ENCODE measurements at regions of chr11 and their contacts with region 1.

Region 1: GRCh38 chr11:93234602-93235207 is 36.9 kb upstream of the SLC36A4 start:
- DNase-seq: peak; percentile 84 to 88
- H3K4me3 ChIP-seq: no peak overlapping the region
- H3K4me3 Mint-ChIP-seq: no peak overlapping the region
- H3K27ac Mint-ChIP-seq: no peak overlapping the region
- H3K4me1 ChIP-seq: no peaks in the 10 kb centered on the region
- H3K4me1 Mint-ChIP-seq: peaks cover under 1% of the 10 kb centered on the region
- H3K27me3 ChIP-seq: peaks cover 6% of the 10 kb centered on the region; the same call in 1 of the 2 replicates
- H3K27me3 Mint-ChIP-seq: peaks cover 7% of the 10 kb centered on the region
- CTCF ChIP-seq: peak; percentile 97

Region 2: DNA sequence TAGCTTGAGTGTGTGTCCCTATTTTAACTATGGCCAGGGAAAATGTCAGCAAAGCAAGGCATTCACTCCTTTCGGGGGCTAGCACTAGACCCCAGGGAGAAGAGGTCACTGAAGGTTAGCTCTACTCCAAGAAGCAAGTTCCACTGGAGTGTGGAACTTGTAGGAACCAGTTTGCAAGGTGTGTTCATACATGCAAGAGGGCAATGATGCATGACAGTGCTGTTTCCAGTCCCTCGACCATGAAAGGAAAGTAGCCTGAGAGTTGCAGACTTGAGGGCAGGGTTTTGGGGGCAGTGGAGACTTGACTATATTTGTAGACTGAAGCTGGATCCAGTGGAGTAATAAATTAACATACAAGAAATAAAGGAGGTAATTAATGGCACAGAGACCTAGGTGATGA is 15.3 kb before region 1 on chr11:
- CTCF ChIA-PET with region 1: no interaction called
- POLR2A ChIA-PET with region 1: no interaction called
- intact Hi-C with region 1: no loop called
- DNase-seq: no peak
- H3K4me3 ChIP-seq: no peak overlapping the region
- H3K4me3 Mint-ChIP-seq: no peak overlapping the region
- H3K27ac Mint-ChIP-seq: no peak overlapping the region
- H3K4me1 ChIP-seq: no peaks in the 10 kb centered on the region
- H3K4me1 Mint-ChIP-seq: no peaks in the 10 kb centered on the region
- H3K27me3 ChIP-seq: 0 out of 2 replicates have a peak, but pooled peaks cover 1% of the 10 kb centered on the region
- H3K27me3 Mint-ChIP-seq: peaks cover 34% of the 10 kb centered on the region
- CTCF ChIP-seq: no peak

Region 3: DNA sequence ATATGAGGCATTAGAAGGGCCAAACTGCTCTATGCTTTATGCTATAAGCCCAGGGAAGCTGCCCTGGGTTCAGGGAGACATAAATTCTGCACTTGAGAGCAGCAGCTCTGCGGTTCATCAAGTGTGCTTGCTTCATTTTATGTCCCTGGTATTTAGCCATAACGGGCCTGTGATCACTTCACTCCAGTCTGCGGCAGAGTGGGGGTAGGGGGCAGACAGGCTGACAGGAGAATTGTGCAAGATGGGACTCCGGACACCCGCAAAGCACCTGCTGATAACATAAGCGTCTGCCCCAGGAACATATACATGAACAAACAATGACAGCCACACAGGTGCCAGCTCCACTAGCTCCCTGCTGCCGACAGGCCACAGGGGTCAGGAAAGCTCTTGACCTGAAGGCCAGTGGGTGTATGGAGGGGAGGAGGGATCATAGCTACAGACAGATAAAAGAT is 252.4 kb after region 1 on chr11:
- CTCF ChIA-PET with region 1: no interaction called
- POLR2A ChIA-PET with region 1: no interaction called
- intact Hi-C with region 1: loop called (anchors 5 kb)
- DNase-seq: peak; percentile 80 to 86
- H3K4me3 ChIP-seq: no peak overlapping the region
- H3K4me3 Mint-ChIP-seq: no peak overlapping the region
- H3K27ac Mint-ChIP-seq: no peak overlapping the region
- H3K4me1 ChIP-seq: peaks cover 14% of the 10 kb centered on the region
- H3K4me1 Mint-ChIP-seq: peaks cover 11% of the 10 kb centered on the region
- H3K27me3 ChIP-seq: no peaks in the 10 kb centered on the region
- H3K27me3 Mint-ChIP-seq: no peaks in the 10 kb centered on the region
- CTCF ChIP-seq: no peak

Region 4: GRCh38 chr11:93622043-93622442 is 387.3 kb after region 1 on chr11:
- CTCF ChIA-PET with region 1: interaction called, 5 read pairs
- POLR2A ChIA-PET with region 1: no interaction called
- intact Hi-C with region 1: loop called (anchors 1 kb)
- DNase-seq: peak in 1 of 2 experiments; percentile 39
- H3K4me3 ChIP-seq: no peak overlapping the region
- H3K4me3 Mint-ChIP-seq: no peak overlapping the region
- H3K27ac Mint-ChIP-seq: no peak overlapping the region
- H3K4me1 ChIP-seq: peaks cover 13% of the 10 kb centered on the region
- H3K4me1 Mint-ChIP-seq: peaks cover 14% of the 10 kb centered on the region
- H3K27me3 ChIP-seq: no peaks in the 10 kb centered on the region
- H3K27me3 Mint-ChIP-seq: no peaks in the 10 kb centered on the region
- CTCF ChIP-seq: peak in 1 of 2 experiments; percentile 32

Region 5: DNA sequence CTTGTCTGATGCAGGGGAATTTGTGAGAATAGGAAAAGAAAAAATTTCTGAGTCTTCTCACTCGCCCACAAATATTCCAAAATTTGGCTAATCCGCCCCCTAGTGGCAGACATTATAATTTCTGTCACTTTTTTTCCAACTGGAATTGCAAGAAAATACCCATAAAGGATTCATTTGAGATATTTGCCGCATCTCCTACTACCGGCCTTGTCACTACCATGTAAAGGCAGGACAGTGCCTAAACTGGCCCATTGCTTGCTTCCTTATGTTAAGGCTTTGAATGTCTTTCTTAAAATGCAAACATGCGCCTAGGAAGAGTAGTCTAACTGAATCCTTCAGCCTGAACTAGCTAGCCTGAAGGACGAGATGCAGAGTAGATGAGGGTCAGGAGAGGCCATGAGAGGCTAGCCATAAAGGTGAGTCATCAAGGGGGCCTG is 417.5 kb after region 1 on chr11:
- CTCF ChIA-PET with region 1: interaction called, 18 read pairs
- POLR2A ChIA-PET with region 1: no interaction called
- intact Hi-C with region 1: loop called (anchors 1 kb)
- DNase-seq: peak in 1 of 2 experiments; percentile 84
- H3K4me3 ChIP-seq: no peak overlapping the region
- H3K4me3 Mint-ChIP-seq: no peak overlapping the region
- H3K27ac Mint-ChIP-seq: no peak overlapping the region
- H3K4me1 ChIP-seq: peaks cover 13% of the 10 kb centered on the region
- H3K4me1 Mint-ChIP-seq: peaks cover 24% of the 10 kb centered on the region
- H3K27me3 ChIP-seq: no peaks in the 10 kb centered on the region; the same call in 1 of the 2 replicates
- H3K27me3 Mint-ChIP-seq: peaks cover 16% of the 10 kb centered on the region
- CTCF ChIP-seq: peak; percentile 83

Region 6: DNA sequence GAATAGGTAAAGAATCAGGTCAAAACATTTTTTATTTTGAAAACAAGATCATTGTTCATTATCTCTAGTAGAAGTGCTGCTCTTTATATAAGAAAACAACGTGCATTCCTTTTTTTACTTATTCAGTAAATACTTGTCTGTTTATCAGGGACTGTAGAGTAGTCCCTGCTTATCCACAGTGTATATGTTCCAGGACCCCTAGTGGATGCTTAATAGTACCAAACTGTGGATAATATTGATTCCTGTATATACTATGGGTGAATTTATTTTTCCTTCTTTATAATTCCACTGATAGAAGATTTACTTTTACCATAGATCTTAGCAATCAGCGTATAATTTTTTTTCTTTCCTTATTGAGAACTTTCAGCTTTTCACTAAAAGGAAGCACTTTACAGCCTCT is 459.4 kb after region 1 on chr11:
- CTCF ChIA-PET with region 1: no interaction called
- POLR2A ChIA-PET with region 1: no interaction called
- intact Hi-C with region 1: loop called (anchors 1 kb)
- DNase-seq: no peak
- H3K4me3 ChIP-seq: no peak overlapping the region
- H3K4me3 Mint-ChIP-seq: no peak overlapping the region
- H3K27ac Mint-ChIP-seq: no peak overlapping the region
- H3K4me1 ChIP-seq: no peaks in the 10 kb centered on the region
- H3K4me1 Mint-ChIP-seq: no peaks in the 10 kb centered on the region
- H3K27me3 ChIP-seq: no peaks in the 10 kb centered on the region
- H3K27me3 Mint-ChIP-seq: no peaks in the 10 kb centered on the region
- CTCF ChIP-seq: peak; percentile 19 to 25